GM18951 (cell line): ENCODE measurements at regions of chr14 and their contacts with region 1.

Region 1: DNA sequence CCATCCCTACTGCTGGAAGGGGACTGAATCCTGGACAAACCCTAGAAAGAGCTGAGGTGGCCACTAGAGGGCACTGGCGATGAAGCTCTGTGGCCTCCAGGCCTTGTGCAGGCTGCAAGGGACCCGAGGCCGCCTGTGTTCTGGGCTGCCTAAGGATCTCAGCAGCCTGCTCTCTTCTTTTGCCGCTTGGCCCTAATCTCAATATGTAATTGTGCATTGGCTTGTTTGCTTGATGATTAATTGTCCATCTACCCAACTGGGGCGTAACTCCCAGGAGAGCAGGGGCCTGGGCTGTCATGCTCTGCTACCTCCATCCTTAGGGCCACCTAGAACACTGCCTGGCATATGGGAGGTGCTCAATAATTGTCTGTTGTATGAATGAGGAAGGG is 73.8 kb downstream of the SYNE3 start:
- POLR2A ChIP-seq: no peak

Region 2: GRCh38 chr14:95527387-95528002 is 84.9 kb after region 1 on chr14:
- in situ Hi-C with region 1: loop called (anchors 5 kb)
- POLR2A ChIP-seq: no peak

Region 3: DNA sequence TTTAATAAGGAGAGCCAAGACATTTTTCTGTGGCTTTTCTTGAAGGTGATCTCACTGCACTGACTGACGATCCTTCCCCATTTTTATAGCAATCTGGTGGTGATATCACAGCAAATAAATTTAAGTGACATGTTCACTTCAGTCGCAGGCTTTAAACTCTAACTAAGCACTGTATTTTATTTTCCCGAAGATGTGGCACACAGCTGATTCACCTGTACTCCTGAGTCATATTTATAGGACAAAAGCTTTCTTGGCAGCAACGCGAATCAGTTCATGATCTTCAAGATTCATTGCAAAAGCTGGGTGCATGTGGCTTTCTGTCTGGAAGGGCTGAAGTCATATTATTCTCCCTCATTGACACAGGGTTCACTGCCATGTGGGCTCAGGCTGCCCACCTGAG is 354.2 kb after region 1 on chr14:
- in situ Hi-C with region 1: no loop called
- POLR2A ChIP-seq: no peak